ENCODE measurements at regions of chr6 and their contacts with region 1.

Region 1: GRCh38 chr6:132569170-132569569 is 952 bp upstream of the TAAR6 start:
- DNase-seq: no peak
- ATAC-seq: no peak
- H3K4me3 ChIP-seq: no peak overlapping the region
- H3K27ac ChIP-seq: no peak overlapping the region
- H3K4me1 ChIP-seq: peaks cover 0 to 8% (median 0%) of the 10 kb centered on the region in 9 donors
- H3K27me3 ChIP-seq: peaks cover 0 to 56% (median 20%) of the 10 kb centered on the region in 7 donors
- CTCF ChIP-seq: no peak

Region 2: DNA sequence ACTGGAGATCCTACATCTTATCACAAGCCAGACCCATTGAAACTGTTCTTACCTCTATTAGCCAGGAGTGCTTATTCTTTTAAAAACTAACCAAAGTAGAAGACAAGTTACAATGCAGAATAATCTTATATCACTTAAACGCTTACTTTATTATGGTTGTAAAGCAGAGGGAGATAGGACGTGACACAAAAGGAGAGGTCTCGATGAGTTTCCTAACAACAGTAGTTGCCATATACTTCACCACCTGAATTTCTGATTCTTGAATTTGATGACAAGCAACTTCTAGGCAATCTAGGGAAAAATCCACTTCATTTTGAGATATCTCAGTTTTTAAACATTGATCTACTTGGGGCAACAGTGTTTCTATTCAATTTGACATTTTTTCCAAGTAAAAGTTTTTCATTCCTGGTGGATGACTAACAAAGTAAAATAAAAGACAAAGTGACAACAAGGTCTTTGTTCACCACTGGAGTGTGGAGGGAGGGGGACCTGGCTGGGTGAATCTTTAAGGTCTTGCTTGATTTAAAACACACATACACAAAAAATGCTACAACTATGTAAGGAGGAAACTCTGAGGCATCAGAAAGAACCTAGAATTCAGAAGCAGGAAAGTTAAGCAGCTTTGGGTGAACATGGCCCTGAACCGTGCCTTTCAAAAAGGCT is 1631.1 kb before region 1 on chr6:
- intact Hi-C with region 1: loop called in 1 of 10 experiments (anchors 5 kb)
- DNase-seq: no peak
- ATAC-seq: no peak
- H3K4me3 ChIP-seq: no peak overlapping the region
- H3K27ac ChIP-seq: no peak overlapping the region
- H3K4me1 ChIP-seq: peaks cover 2 to 39% (median 25%) of the 10 kb centered on the region in 9 donors
- H3K27me3 ChIP-seq: no peaks in the 10 kb centered on the region
- CTCF ChIP-seq: no peak